Naive thymus-derived CD4-positive, alpha-beta T cell (primary cell): ENCODE measurements at regions of chrX and their contacts with region 1.

Region 1: GRCh38 chrX:130268500-130269170 is at the start of gene ZNF280C:
- DNase-seq: peak; percentile 71 to 92 (median 88)
- ATAC-seq: peak; percentile 98
- H3K4me3 ChIP-seq: peak within 1 kb of the TSS; percentile 82
- H3K4me3 Mint-ChIP-seq: peak within 1 kb of the TSS; percentile 86 to 92 (median 89)
- H3K27ac ChIP-seq: peak within 1 kb of the TSS; percentile 77
- H3K27ac Mint-ChIP-seq: peak within 1 kb of the TSS; percentile 59 to 91 (median 82)
- H3K4me1 ChIP-seq: peaks cover 0 to 6% of the 10 kb centered on the region in 2 donors
- H3K4me1 Mint-ChIP-seq: peaks cover 0 to 26% (median 16%) of the 10 kb centered on the region in 7 donors
- H3K27me3 ChIP-seq: no peaks in the 10 kb centered on the region
- H3K27me3 Mint-ChIP-seq: peaks cover 0 to 7% (median 0%) of the 10 kb centered on the region in 5 donors
- total RNA-seq, gene ZNF280C: 3.9 to 5.6 (median 4.4) TPM

Region 2: DNA sequence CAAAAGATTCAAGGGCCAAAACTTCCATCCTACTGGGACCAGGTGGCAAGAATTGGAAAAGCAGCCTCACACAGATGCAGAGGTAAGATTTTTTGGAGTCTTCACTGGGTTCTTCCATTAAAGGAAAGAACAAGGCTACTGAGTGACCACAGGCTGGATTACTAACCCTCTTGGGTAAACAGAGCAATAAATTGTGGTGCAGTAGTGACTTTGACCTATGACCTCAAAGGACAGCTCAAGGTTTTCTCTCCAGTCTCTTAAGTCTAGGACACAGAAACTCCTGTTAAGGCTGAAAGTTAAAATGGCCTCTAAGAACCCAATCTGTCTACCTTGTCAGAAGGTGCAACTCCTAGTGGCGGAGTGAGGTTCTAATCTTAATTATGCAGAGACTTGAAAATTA is 1210.2 kb before region 1 on chrX:
- CTCF ChIA-PET with region 1: no interaction called
- POLR2A ChIA-PET with region 1: no interaction called
- intact Hi-C with region 1: no loop called
- DNase-seq: no peak
- ATAC-seq: no peak
- H3K4me3 ChIP-seq: no peak overlapping the region
- H3K4me3 Mint-ChIP-seq: no peak overlapping the region
- H3K27ac ChIP-seq: no peak overlapping the region
- H3K27ac Mint-ChIP-seq: no peak overlapping the region
- H3K4me1 ChIP-seq: no peaks in the 10 kb centered on the region
- H3K4me1 Mint-ChIP-seq: no peaks in the 10 kb centered on the region
- H3K27me3 ChIP-seq: no peaks in the 10 kb centered on the region
- H3K27me3 Mint-ChIP-seq: peaks cover 0 to 7% (median 0%) of the 10 kb centered on the region in 5 donors

Region 3: DNA sequence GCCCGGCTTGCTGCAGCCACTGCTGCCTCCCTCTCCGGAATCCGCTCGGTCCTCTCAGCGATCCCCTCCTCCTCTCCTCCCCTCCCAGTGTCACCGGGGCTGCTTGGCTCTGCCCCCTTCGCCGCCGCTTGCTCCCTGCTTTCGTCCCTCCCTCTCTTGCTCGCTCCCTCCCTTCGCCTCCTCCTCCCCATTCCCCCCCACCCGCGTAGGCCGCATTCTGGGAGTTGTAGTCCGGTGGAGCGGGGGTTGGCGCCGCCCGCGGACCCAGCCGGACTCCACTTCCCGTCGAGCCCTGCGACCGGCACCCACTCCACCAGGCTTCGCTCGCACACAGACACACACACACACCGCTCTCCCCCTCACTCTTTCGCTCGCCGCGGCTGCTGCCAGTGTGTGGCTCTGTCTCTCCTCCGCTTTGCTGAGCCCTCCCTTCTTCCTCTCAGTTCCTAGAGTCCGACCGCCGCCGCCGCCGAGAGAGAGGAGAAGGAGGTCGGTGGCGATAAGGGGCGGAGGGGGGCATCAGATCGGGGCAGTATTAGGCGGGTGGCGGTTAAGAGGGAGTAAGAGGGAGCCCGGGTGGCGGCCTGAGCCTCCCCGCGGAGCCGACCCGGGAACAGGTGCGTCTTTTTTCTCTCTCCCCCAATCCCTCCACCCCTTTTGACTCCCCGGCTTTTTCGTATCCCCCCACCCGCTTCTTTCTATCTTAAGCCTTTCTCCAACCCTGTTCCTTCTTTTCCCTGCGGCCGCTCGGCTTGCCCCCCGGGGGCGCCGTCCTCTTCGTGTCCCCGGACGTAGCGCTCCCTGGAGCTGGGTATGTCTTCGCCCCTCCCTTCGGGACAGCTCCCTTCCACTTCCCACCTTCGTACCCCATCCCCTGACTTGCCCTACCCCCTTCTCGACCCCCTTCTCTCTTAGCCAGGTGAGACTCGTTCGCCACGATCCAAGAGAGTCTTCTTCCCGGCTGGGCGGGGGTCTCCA is 286.1 kb before region 1 on chrX and contains the start of gene BCORL1:
- CTCF ChIA-PET with region 1: no interaction called
- POLR2A ChIA-PET with region 1: no interaction called
- intact Hi-C with region 1: loop called in 1 of 2 experiments (anchors 1 kb)
- DNase-seq: peak; percentile 62 to 89 (median 84)
- ATAC-seq: peak; percentile 96
- H3K4me3 ChIP-seq: peak within 1 kb of the TSS; percentile 61
- H3K4me3 Mint-ChIP-seq: peak within 1 kb of the TSS in 1 of 10 donors; percentile 85
- H3K27ac ChIP-seq: no peak within 1 kb of the TSS
- H3K27ac Mint-ChIP-seq: peak within 1 kb of the TSS in 7 of 9 donors; percentile 31 to 82 (median 59)
- H3K4me1 ChIP-seq: no peaks in the 10 kb centered on the region
- H3K4me1 Mint-ChIP-seq: peaks cover 19 to 34% (median 27%) of the 10 kb centered on the region in 7 donors
- H3K27me3 ChIP-seq: no peaks in the 10 kb centered on the region
- H3K27me3 Mint-ChIP-seq: peaks cover 0 to 30% (median 0%) of the 10 kb centered on the region in 5 donors
- total RNA-seq, gene BCORL1: 5.8 to 8.9 (median 8.2) TPM

Region 4: GRCh38 chrX:130120746-130121504 is 147.7 kb before region 1 on chrX:
- CTCF ChIA-PET with region 1: no interaction called
- POLR2A ChIA-PET with region 1: no interaction called
- intact Hi-C with region 1: loop called in 1 of 2 experiments (anchors 5 kb)
- DNase-seq: peak; percentile 50 to 75 (median 68)
- ATAC-seq: peak; percentile 91
- H3K4me3 ChIP-seq: peak overlapping the region; percentile 53
- H3K4me3 Mint-ChIP-seq: peak overlapping the region; percentile 29 to 74 (median 71)
- H3K27ac ChIP-seq: no peak overlapping the region
- H3K27ac Mint-ChIP-seq: peak overlapping the region in 1 of 9 donors; percentile 58
- H3K4me1 ChIP-seq: no peaks in the 10 kb centered on the region
- H3K4me1 Mint-ChIP-seq: peaks cover 0 to 19% (median 4%) of the 10 kb centered on the region in 7 donors
- H3K27me3 ChIP-seq: no peaks in the 10 kb centered on the region
- H3K27me3 Mint-ChIP-seq: no peaks in the 10 kb centered on the region

Region 5: GRCh38 chrX:130130990-130131389 is 137.6 kb before region 1 on chrX:
- CTCF ChIA-PET with region 1: no interaction called
- POLR2A ChIA-PET with region 1: no interaction called
- intact Hi-C with region 1: no loop called
- DNase-seq: no peak
- ATAC-seq: no peak
- H3K4me3 ChIP-seq: no peak overlapping the region
- H3K4me3 Mint-ChIP-seq: no peak overlapping the region
- H3K27ac ChIP-seq: no peak overlapping the region
- H3K27ac Mint-ChIP-seq: no peak overlapping the region
- H3K4me1 ChIP-seq: no peaks in the 10 kb centered on the region
- H3K4me1 Mint-ChIP-seq: peaks cover 0 to 2% (median 0%) of the 10 kb centered on the region in 7 donors
- H3K27me3 ChIP-seq: no peaks in the 10 kb centered on the region
- H3K27me3 Mint-ChIP-seq: no peaks in the 10 kb centered on the region

Region 6: GRCh38 chrX:130173190-130173895 is 95.3 kb before region 1 on chrX:
- CTCF ChIA-PET with region 1: no interaction called
- POLR2A ChIA-PET with region 1: interaction called, 3 read pairs
- intact Hi-C with region 1: loop called in 1 of 2 experiments (anchors 2 kb)
- DNase-seq: peak in 2 of 9 donors; percentile 16 to 35
- ATAC-seq: peak; percentile 31
- H3K4me3 ChIP-seq: peak overlapping the region; percentile 82
- H3K4me3 Mint-ChIP-seq: peak overlapping the region; percentile 85 to 96 (median 92)
- H3K27ac ChIP-seq: peak overlapping the region; percentile 74
- H3K27ac Mint-ChIP-seq: peak overlapping the region; percentile 86 to 94 (median 88)
- H3K4me1 ChIP-seq: peaks cover 12 to 26% of the 10 kb centered on the region in 2 donors
- H3K4me1 Mint-ChIP-seq: peaks cover 8 to 52% (median 45%) of the 10 kb centered on the region in 7 donors
- H3K27me3 ChIP-seq: no peaks in the 10 kb centered on the region
- H3K27me3 Mint-ChIP-seq: no peaks in the 10 kb centered on the region

Region 7: GRCh38 chrX:130339408-130340222 is 71.0 kb after region 1 on chrX and contains the start of gene SLC25A14:
- CTCF ChIA-PET with region 1: interaction called, 4 read pairs
- POLR2A ChIA-PET with region 1: no interaction called
- intact Hi-C with region 1: loop called (anchors 1 kb)
- DNase-seq: peak; percentile 33 to 79 (median 72)
- ATAC-seq: peak; percentile 94
- H3K4me3 ChIP-seq: peak within 1 kb of the TSS; percentile 90
- H3K4me3 Mint-ChIP-seq: peak within 1 kb of the TSS; percentile 89 to 99 (median 94)
- H3K27ac ChIP-seq: peak within 1 kb of the TSS; percentile 68
- H3K27ac Mint-ChIP-seq: peak within 1 kb of the TSS; percentile 80 to 95 (median 90)
- H3K4me1 ChIP-seq: peaks cover 4 to 5% of the 10 kb centered on the region in 2 donors
- H3K4me1 Mint-ChIP-seq: peaks cover 7 to 25% (median 21%) of the 10 kb centered on the region in 7 donors
- H3K27me3 ChIP-seq: no peaks in the 10 kb centered on the region
- H3K27me3 Mint-ChIP-seq: no peaks in the 10 kb centered on the region
- total RNA-seq, gene SLC25A14: 10.7 to 14.3 (median 13.8) TPM

Region 8: DNA sequence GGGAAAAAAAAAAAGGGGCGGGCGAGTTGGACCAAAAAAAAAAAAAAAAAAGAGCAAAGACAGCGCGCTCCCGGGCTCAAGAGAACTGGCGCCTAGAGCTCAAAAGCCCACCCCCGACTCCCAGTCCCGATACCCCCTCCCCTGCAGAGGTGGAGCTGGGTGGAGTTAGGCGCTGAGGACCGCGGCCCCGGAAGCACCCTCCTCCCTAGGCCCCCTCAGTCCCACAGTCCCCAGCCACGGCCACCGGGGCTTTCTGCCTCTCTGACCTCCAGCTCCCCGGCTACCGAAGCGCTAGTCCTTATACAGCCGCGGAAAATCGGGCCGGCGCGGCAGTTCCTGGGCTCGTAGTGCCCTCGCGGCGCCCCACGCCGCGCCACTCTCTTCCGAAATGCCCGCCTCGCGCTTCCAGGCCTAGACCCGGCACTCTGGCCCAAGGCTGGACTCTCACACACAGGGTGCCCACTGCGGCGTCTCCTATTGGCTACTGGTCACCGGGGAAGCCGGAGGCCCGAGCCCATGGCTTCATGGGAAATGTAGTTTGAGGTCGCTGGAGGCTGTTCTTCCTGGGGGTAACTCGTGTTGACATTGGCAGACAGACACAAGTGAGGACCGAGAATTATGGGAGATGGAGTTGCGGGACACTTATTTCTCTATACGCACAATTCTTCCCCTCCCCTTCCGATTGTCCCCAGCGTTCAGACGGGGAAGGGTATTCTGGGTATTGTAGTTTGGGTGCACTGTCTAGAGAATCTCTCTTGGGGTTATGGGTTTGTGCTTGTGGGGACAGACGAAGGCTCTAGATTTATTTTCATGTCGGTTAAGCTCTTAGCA is 634.4 kb after region 1 on chrX and contains the start of gene ENOX2:
- CTCF ChIA-PET with region 1: no interaction called
- POLR2A ChIA-PET with region 1: no interaction called
- intact Hi-C with region 1: loop called (anchors 1 kb)
- DNase-seq: peak; percentile 51 to 90 (median 83)
- ATAC-seq: peak; percentile 98
- H3K4me3 ChIP-seq: peak within 1 kb of the TSS; percentile 79
- H3K4me3 Mint-ChIP-seq: no peak within 1 kb of the TSS
- H3K27ac ChIP-seq: peak within 1 kb of the TSS; percentile 93
- H3K27ac Mint-ChIP-seq: peak within 1 kb of the TSS in 6 of 9 donors; percentile 51 to 91 (median 71)
- H3K4me1 ChIP-seq: peaks cover 0 to 5% of the 10 kb centered on the region in 2 donors
- H3K4me1 Mint-ChIP-seq: peaks cover 5 to 14% (median 12%) of the 10 kb centered on the region in 7 donors
- H3K27me3 ChIP-seq: no peaks in the 10 kb centered on the region
- H3K27me3 Mint-ChIP-seq: no peaks in the 10 kb centered on the region
- total RNA-seq, gene ENOX2: 10.3 to 15.3 (median 12.1) TPM

Region 9: GRCh38 chrX:132219343-132219768 is 1950.7 kb after region 1 on chrX and contains the start of gene RAP2C:
- CTCF ChIA-PET with region 1: no interaction called
- POLR2A ChIA-PET with region 1: no interaction called
- intact Hi-C with region 1: loop called in 1 of 2 experiments (anchors 5 kb)
- DNase-seq: peak; percentile 15 to 50 (median 32)
- ATAC-seq: peak; percentile 47
- H3K4me3 ChIP-seq: peak within 1 kb of the TSS; percentile 51
- H3K4me3 Mint-ChIP-seq: peak within 1 kb of the TSS; percentile 79 to 96 (median 88)
- H3K27ac ChIP-seq: peak within 1 kb of the TSS; percentile 94
- H3K27ac Mint-ChIP-seq: peak within 1 kb of the TSS; percentile 87 to 97 (median 94)
- H3K4me1 ChIP-seq: peaks cover 9 to 14% of the 10 kb centered on the region in 2 donors
- H3K4me1 Mint-ChIP-seq: peaks cover 7 to 35% (median 25%) of the 10 kb centered on the region in 7 donors
- H3K27me3 ChIP-seq: no peaks in the 10 kb centered on the region
- H3K27me3 Mint-ChIP-seq: no peaks in the 10 kb centered on the region
- total RNA-seq, gene RAP2C: 21.4 to 34.7 (median 30.3) TPM